ENCODE measurements at regions of chr2 and their contacts with region 1.

Region 1: GRCh38 chr2:101341901-101342624 is 33.6 kb upstream of the RNF149 start:
- DNase-seq: peak; percentile 64 to 76
- ATAC-seq: peak; percentile 77 to 93
- H3K4me3 ChIP-seq: no peak overlapping the region
- H3K27ac ChIP-seq: peak overlapping the region in 1 of 2 experiments; percentile 53; a peak in 1 of 6 replicates
- H3K4me1 ChIP-seq: 0 out of 3 replicates have a peak, but pooled peaks cover 3% of the 10 kb centered on the region
- CTCF ChIP-seq: peak; percentile 88
- EP300 ChIP-seq: no peak
- POLR2A ChIP-seq: no peak
- RAD21 ChIP-seq: peak; percentile 90

Region 2: DNA sequence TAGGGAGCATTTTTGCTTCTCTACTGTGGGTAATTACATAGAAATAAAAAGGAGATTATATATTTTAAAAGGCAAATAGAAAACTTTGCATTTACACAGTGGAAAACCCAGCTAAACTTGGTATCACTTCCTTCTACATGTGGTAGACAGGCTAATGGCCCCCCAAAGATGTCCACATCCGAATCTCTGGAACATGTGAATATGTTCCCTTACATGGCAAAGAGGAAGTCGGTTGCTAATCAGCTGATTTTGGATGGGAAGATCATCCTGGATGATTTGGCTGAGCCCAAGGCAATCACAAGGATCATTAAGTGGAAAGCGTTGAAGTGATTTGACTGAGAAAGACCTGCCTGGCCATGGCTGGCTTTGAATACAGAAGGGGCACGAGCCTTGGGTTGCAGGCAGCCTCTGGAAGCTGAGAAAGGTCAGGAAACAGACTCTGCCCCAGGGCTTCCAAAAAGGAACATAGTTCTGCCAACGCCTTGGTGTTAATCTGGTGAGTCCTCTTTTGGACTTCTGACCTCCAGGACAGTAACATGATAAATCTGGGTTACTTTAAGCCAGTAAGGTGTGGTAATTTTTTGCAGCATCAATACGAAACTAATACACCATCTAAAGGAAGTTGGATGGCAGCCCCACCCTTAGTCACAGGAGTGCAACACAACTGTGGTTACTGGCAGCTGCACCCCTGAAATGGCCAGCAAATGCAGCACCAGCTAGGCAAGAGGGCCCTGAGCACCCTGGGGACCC is 19.2 kb after region 1 on chr2:
- CTCF ChIA-PET with region 1: interaction called, 24 read pairs
- POLR2A ChIA-PET with region 1: no interaction called
- DNase-seq: no peak
- ATAC-seq: no peak
- H3K4me3 ChIP-seq: no peak overlapping the region
- H3K27ac ChIP-seq: peak overlapping the region; percentile 24 to 27; a peak in 4 of 6 replicates
- H3K4me1 ChIP-seq: peaks cover 36% of the 10 kb centered on the region
- CTCF ChIP-seq: no peak
- EP300 ChIP-seq: no peak
- POLR2A ChIP-seq: no peak
- RAD21 ChIP-seq: no peak

Region 3: DNA sequence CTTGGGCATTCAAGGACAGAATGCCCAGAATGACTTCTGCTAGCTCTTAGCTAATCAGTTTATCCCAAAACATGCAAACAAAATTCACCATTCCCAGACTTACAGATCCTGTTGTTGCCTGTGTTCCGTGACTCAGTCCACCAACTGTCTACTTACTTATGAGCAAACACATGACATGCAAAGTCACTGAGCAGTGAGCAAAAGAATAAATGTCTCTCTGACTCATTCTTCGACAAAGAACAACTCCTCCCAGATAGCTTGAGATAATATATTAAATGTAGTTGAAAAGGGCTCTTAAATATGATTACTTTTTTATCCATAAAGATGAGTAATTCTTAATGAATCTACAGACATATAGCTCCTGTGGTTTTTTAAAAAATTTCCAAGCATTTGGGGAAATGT is 54.3 kb after region 1 on chr2:
- CTCF ChIA-PET with region 1: interaction called, 25 read pairs
- POLR2A ChIA-PET with region 1: no interaction called
- DNase-seq: peak; percentile 65 to 76
- ATAC-seq: peak; percentile 86 to 93
- H3K4me3 ChIP-seq: peak overlapping the region; percentile 9; the same call in 2 of the 3 replicates
- H3K27ac ChIP-seq: peak overlapping the region; percentile 81 to 85
- H3K4me1 ChIP-seq: peaks cover 25% of the 10 kb centered on the region
- CTCF ChIP-seq: no peak
- EP300 ChIP-seq: no peak
- POLR2A ChIP-seq: no peak
- RAD21 ChIP-seq: no peak

Region 4: GRCh38 chr2:101419096-101419663 is 77.1 kb after region 1 on chr2:
- CTCF ChIA-PET with region 1: interaction called, 14 read pairs
- POLR2A ChIA-PET with region 1: no interaction called
- DNase-seq: peak; percentile 53 to 70
- ATAC-seq: peak; percentile 85 to 94; a peak in 5 of 6 replicates
- H3K4me3 ChIP-seq: no peak overlapping the region
- H3K27ac ChIP-seq: peak overlapping the region; percentile 1 to 52; a peak in 4 of 6 replicates
- H3K4me1 ChIP-seq: no peaks in the 10 kb centered on the region
- CTCF ChIP-seq: peak; percentile 90
- EP300 ChIP-seq: no peak
- POLR2A ChIP-seq: no peak
- RAD21 ChIP-seq: peak; percentile 92 to 94

Region 5: GRCh38 chr2:101580528-101580927 is 238.5 kb after region 1 on chr2:
- CTCF ChIA-PET with region 1: no interaction called
- POLR2A ChIA-PET with region 1: no interaction called
- DNase-seq: no peak
- ATAC-seq: no peak
- H3K4me3 ChIP-seq: no peak overlapping the region
- H3K27ac ChIP-seq: no peak overlapping the region
- H3K4me1 ChIP-seq: no peaks in the 10 kb centered on the region
- CTCF ChIP-seq: no peak
- EP300 ChIP-seq: no peak
- POLR2A ChIP-seq: no peak
- RAD21 ChIP-seq: no peak

Region 6: GRCh38 chr2:101688261-101688660 is 346.2 kb after region 1 on chr2:
- CTCF ChIA-PET with region 1: no interaction called
- POLR2A ChIA-PET with region 1: no interaction called
- DNase-seq: no peak
- ATAC-seq: no peak
- H3K4me3 ChIP-seq: no peak overlapping the region
- H3K27ac ChIP-seq: no peak overlapping the region
- H3K4me1 ChIP-seq: no peaks in the 10 kb centered on the region
- CTCF ChIP-seq: no peak
- EP300 ChIP-seq: no peak
- POLR2A ChIP-seq: no peak
- RAD21 ChIP-seq: no peak